HepG2 (cell line): ENCODE measurements at regions of chr3 and their contacts with region 1.

Region 1: GRCh38 chr3:48088749-48089466 is 72.7 kb upstream of the MAP4 start:
- DNase-seq: peak; percentile 89
- ATAC-seq: peak; percentile 97
- H3K4me3 ChIP-seq: peak overlapping the region; percentile 73 to 94 (median 88)
- H3K27ac ChIP-seq: peak overlapping the region; percentile 93
- H3K4me1 ChIP-seq: peaks cover 41% of the 10 kb centered on the region
- H3K27me3 ChIP-seq: no peaks in the 10 kb centered on the region; a peak in 2 of 5 replicates
- CTCF ChIP-seq: no peak
- EP300 ChIP-seq: no peak; a peak in 1 of 4 replicates
- POLR2A ChIP-seq: peak; percentile 90 to 91
- RAD21 ChIP-seq: peak; percentile 57; the same call in 1 of the 2 replicates

Region 2: DNA sequence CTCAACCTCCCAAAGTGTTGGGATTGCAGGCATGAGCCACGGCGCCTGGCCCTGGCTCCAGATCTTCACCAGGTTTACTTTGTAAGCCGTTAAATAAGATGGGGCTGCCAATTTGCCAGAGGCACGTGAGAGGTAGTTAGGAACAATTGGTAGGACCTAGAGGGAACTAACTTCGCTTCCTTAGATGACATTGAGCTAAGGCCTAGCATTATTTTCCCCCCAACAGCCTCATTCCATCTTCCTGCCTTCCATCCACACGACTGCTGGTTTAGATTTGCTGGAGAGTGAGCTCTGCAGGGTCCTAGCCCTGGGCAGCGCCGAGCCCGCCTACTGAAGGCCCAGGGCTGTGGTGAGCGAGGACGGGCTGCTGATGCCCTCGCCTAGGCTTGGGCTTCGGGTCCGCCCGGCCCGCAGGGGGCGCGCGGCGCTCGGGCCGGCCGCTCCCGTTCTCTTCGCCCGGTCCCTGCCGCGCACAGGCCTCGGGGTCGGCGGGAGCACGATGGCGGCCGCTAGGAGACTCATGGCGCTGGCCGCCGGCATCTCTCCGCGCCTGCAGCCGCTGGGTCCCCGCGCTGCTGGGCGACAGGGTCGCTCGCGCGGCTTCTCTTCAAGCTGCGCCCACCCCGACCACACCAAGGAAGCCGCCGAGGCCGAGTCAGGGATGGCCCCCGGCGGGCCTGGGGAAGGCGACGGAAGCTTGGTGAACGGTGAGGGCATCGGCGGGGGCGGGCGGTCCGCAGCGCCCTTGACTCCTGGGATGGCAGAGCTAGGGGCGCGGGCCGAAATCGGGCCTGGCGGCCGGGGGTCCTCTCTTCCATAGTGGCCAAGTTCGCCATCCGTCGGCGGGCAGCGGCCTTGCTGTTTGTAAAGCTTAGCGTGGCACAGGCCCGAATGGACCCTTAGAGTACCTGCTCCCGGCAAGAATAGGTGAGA is 264.1 kb before region 1 on chr3:
- CTCF ChIA-PET with region 1: no interaction called
- POLR2A ChIA-PET with region 1: interaction called, 12 read pairs
- in situ Hi-C with region 1: no loop called
- intact Hi-C with region 1: no loop called
- DNase-seq: peak; percentile 69
- ATAC-seq: peak; percentile 99
- H3K4me3 ChIP-seq: peak overlapping the region; percentile 88 to 98 (median 91)
- H3K27ac ChIP-seq: peak overlapping the region; percentile 73
- H3K4me1 ChIP-seq: peaks cover 22% of the 10 kb centered on the region
- H3K27me3 ChIP-seq: no peaks in the 10 kb centered on the region; a peak in 1 of 5 replicates
- CTCF ChIP-seq: peak; percentile 85
- EP300 ChIP-seq: 0 out of 4 replicates have a peak, but pooled peaks have one; percentile 4 to 30
- POLR2A ChIP-seq: peak; percentile 73 to 81
- RAD21 ChIP-seq: peak; percentile 85

Region 3: DNA sequence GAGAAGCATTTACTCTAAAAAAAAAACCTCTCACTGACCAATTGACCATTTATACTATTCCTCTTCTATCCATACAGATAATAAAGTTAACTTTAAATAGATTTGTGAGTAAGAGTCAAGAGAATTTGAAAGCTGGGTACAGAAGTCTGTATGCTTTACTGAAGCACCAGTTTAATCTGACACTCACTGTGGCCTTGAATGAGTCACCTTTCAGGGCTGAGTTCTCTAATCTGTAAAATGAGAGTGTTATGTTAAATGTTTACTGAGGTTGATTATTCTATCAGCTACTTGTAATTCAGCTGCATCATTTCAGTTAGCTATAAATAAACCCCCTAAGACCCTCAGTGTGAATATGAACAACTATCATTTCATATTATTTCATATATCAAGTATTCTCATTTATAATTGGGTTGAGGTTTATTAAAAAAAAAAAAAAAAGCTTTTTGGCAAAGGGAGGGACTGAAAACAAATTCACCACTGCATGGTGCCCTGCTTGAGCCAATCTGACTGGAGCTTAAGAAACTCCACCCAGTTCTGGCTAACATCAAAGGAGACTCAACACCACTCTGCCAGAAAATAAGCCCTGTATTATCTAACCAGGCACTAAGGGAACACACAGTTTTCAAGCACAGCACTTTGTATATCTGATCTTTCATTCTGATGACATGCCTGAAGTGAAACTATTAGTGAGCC is 75.5 kb before region 1 on chr3:
- CTCF ChIA-PET with region 1: no interaction called
- POLR2A ChIA-PET with region 1: interaction called, 13 read pairs
- in situ Hi-C with region 1: no loop called
- intact Hi-C with region 1: no loop called
- DNase-seq: peak; percentile 82
- ATAC-seq: peak; percentile 91
- H3K4me3 ChIP-seq: peak overlapping the region in 1 of 3 experiments; percentile 2; a peak in 1 of 6 replicates
- H3K27ac ChIP-seq: peak overlapping the region; percentile 53
- H3K4me1 ChIP-seq: peaks cover 70% of the 10 kb centered on the region
- H3K27me3 ChIP-seq: no peaks in the 10 kb centered on the region
- CTCF ChIP-seq: no peak
- EP300 ChIP-seq: no peak; a peak in 1 of 4 replicates
- POLR2A ChIP-seq: no peak
- RAD21 ChIP-seq: no peak

Region 4: DNA sequence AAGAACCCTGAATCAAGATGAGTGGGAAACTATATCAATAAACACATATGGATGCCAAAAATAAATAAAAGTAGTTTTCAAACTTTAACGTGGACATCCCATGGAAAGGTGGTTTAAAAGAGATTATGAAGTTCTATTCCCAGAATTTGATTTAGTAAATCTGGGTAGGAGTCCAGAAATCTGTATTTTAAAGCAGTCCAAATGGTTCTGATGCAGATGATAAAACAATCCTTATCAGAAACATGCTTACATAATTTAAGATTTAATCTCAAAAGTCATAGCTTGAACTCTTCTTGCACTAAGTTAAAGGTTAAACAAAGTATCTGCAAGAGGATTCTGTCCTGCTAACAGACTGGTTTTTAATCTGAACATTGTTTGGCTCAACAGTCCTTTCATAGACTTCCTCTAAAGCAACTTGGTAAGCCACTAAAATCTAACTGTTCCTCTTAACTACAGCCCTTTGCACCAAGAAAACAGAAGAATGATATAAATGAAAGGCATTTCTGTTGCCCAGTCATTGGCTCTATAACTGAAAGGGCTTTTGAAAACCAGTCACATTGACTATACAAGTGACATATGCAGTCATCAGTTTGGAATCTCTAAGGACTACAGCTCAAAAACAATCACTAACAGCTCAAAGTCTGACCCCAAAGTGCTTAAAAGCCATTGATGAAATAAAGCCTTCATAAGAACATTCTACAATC is 49.3 kb before region 1 on chr3:
- CTCF ChIA-PET with region 1: no interaction called
- POLR2A ChIA-PET with region 1: interaction called, 17 read pairs
- in situ Hi-C with region 1: no loop called
- intact Hi-C with region 1: loop called (anchors 2 kb)
- DNase-seq: peak; percentile 97
- ATAC-seq: peak; percentile 93
- H3K4me3 ChIP-seq: peak overlapping the region; percentile 39 to 52 (median 44)
- H3K27ac ChIP-seq: peak overlapping the region; percentile 98
- H3K4me1 ChIP-seq: peaks cover 49% of the 10 kb centered on the region
- H3K27me3 ChIP-seq: no peaks in the 10 kb centered on the region
- CTCF ChIP-seq: no peak
- EP300 ChIP-seq: peak in 1 of 2 experiments; percentile 40; a peak in 1 of 4 replicates
- POLR2A ChIP-seq: peak in 1 of 2 experiments; percentile 67; a peak in 3 of 4 replicates
- RAD21 ChIP-seq: no peak

Region 5: GRCh38 chr3:48140336-48140757 is 51.4 kb after region 1 on chr3:
- CTCF ChIA-PET with region 1: no interaction called
- POLR2A ChIA-PET with region 1: no interaction called
- in situ Hi-C with region 1: no loop called
- intact Hi-C with region 1: no loop called
- DNase-seq: no peak
- ATAC-seq: no peak
- H3K4me3 ChIP-seq: peak overlapping the region in 2 of 3 experiments; percentile 33 to 64; a peak in 4 of 6 replicates
- H3K27ac ChIP-seq: no peak overlapping the region
- H3K4me1 ChIP-seq: peaks cover 46% of the 10 kb centered on the region
- H3K27me3 ChIP-seq: 0 out of 5 replicates have a peak, but pooled peaks cover 0 to 9% of the 10 kb centered on the region in 2 experiments
- CTCF ChIP-seq: no peak
- EP300 ChIP-seq: no peak
- POLR2A ChIP-seq: no peak
- RAD21 ChIP-seq: no peak

Region 6: DNA sequence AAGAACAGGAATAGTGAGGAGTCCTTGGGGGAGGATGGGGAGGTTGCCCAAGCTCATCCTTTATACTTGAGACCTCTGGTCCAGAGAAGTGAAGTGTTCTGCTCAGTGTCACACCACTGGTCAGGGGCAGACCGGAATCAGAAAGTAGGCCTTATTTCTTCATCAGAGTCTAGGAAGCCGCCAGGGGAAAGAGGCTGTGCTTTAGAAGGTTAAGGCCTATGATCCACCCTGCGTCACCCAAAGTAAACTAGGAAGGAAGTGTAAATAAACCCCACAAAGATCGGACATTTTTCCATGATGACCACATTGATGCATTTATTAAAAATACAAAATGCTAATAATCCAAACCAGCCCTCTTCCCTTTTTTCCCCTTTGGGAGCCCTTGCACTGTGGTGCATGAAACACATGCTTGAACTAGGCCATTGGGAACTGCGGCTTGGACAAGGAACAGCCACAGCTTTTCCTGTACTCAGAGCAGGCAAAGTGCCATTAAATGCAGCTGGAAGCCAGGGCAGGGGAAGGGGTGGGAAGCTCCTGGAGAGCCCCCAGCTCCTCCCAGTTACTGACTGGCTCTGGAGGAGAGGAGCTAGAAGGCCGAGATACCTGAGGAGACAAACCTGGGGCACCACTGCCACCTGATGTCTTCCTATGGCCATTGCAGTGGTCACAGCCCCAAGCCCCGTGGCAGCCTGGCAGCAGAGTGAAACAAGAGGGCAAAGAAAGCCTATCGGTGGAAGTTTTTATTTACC is 62.3 kb after region 1 on chr3:
- CTCF ChIA-PET with region 1: no interaction called
- POLR2A ChIA-PET with region 1: interaction called, 13 read pairs
- in situ Hi-C with region 1: no loop called
- intact Hi-C with region 1: loop called (anchors 5 kb)
- DNase-seq: peak; percentile 78
- ATAC-seq: peak; percentile 97
- H3K4me3 ChIP-seq: peak overlapping the region in 2 of 3 experiments; percentile 41 to 59; a peak in 5 of 6 replicates
- H3K27ac ChIP-seq: no peak overlapping the region
- H3K4me1 ChIP-seq: peaks cover 22% of the 10 kb centered on the region
- H3K27me3 ChIP-seq: no peaks in the 10 kb centered on the region
- CTCF ChIP-seq: peak; percentile 98
- EP300 ChIP-seq: no peak
- POLR2A ChIP-seq: no peak
- RAD21 ChIP-seq: peak; percentile 96

Region 7: DNA sequence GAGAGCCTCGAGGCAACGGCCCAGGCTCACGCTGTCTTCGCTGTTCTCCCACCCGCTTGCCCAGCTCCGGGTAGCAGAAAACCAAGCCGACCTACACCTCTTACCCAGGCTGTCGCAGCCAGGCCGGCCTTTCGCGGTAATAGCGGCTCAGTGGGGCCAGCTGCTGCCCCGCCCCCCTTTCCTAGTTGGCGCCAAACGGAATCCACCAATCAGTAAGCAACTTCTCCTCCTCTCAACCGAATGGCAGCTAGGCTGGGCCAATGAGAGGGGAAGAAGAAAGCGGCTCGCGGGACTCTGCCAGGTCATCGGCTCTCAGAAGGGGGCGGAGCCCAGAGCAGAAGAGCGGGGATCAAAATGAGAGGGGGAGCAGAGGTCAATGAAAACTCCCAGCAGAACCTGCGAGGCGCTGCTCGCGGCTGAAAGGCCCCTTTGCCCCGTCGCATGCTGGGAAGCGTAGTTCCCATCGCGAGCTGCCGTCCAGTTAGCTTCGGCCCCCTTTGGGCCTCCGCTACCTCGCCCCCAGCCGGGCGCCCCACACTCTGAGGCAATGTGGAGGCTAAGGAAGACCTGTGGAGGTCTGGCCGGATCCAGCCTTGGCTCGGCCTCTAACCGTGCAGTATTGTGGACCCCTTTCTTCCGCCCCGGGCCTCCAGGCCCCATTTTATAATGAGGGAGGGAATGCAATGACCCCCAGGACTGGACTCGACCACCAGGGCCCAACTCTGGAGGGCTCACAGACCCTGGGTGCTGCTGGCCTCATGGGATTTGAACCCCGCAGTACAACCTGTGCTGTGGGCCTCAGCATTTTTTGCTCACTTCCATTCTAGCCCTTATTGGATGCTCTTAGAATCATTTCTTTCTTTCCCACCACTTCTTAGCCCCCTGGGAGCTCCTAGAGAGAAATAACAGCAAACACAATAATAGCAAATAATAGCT is 99.6 kb after region 1 on chr3 and contains the start of gene CDC25A:
- CTCF ChIA-PET with region 1: no interaction called
- POLR2A ChIA-PET with region 1: interaction called, 12 read pairs
- in situ Hi-C with region 1: no loop called
- intact Hi-C with region 1: no loop called
- DNase-seq: peak; percentile 99
- ATAC-seq: peak; percentile 93
- H3K4me3 ChIP-seq: peak within 1 kb of the TSS; percentile 78 to 91 (median 80)
- H3K27ac ChIP-seq: peak within 1 kb of the TSS; percentile 78
- H3K4me1 ChIP-seq: peaks cover 62% of the 10 kb centered on the region
- H3K27me3 ChIP-seq: no peaks in the 10 kb centered on the region
- CTCF ChIP-seq: peak; percentile 11; the same call in 1 of the 2 replicates
- EP300 ChIP-seq: 0 out of 4 replicates have a peak, but pooled peaks of 1 of the 2 experiments have one; percentile 7
- POLR2A ChIP-seq: peak; percentile 74 to 89
- RAD21 ChIP-seq: peak; percentile 33; the same call in 1 of the 2 replicates
- total RNA-seq, gene CDC25A: 45.4 and 54.7 TPM in 2 replicates

Region 8: DNA sequence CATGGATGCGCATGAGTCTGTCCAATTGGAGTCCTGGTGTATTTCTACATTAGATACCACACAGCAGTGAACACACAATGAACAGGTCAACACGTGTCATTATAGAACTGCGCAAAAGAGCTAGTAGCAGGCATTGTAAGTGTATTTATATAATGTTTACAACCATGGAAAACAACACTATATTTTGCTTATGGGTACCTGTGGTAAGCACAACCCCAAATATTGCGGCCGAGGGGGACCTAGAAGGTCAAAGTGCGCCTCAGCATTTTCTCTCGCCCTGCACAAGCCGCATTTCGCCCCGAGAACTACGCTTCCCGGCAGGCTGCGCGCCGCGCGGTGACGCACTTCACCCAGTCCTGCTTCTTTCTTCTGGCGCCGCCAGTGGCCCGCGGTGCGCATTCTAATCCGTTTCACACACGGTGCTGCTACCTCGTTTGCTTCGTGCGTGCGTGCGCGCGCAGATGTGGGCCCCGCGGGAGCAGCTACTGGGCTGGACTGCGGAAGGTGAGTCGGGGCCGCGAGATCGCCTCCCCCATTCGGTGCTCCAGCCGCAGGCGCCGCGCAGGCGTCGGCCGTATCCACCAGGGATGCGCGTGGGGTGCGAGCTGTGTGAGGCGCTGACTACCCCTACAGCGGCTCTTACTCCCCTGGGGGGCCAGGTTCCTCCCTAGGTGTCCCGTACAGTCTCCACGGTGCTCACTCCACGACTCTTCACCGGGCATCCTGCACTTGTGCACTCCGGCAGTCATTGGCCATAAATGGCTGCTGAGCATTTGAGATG is 152.0 kb after region 1 on chr3 and contains the start of gene ZNF589:
- CTCF ChIA-PET with region 1: no interaction called
- POLR2A ChIA-PET with region 1: no interaction called
- in situ Hi-C with region 1: no loop called
- intact Hi-C with region 1: no loop called
- DNase-seq: peak; percentile 94
- ATAC-seq: peak; percentile 98
- H3K4me3 ChIP-seq: peak within 1 kb of the TSS; percentile 76 to 97 (median 91)
- H3K27ac ChIP-seq: peak within 1 kb of the TSS; percentile 83
- H3K4me1 ChIP-seq: peaks cover 45% of the 10 kb centered on the region
- H3K27me3 ChIP-seq: no peaks in the 10 kb centered on the region
- CTCF ChIP-seq: peak; percentile 86
- EP300 ChIP-seq: no peak
- POLR2A ChIP-seq: peak; percentile 92 to 95
- RAD21 ChIP-seq: 0 out of 2 replicates have a peak, but pooled peaks have one; percentile 23
- total RNA-seq, gene ZNF589: 5.6 and 7.3 TPM in 2 replicates